ENCODE measurements at regions of chr12 and their contacts with region 1.

Region 1: DNA sequence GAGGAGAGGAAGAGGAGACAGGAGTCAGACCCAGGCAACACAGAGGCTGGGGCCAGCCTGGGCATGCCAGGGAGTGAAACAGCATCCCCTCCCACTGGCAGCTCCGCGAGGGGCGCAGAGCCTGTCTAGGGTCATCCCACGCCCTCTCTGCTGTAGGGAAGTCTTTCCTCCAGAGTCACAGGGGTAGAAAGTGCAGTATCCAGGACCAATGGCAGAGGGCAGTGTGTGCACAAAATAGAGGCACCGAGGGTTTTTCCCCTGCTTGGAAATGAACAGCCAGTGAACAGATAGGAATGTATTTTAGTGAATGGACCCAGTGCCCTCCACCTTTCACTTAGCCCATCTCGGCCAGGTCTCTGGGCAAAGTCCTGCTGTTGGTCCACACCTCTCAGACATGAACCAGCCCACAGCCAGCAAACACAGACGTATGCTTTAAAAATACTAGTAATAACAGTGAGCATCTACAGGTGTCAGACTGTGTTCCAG is 9.4 kb upstream of the KRT74 start:
- DNase-seq: peak; percentile 40 to 64
- H3K4me3 ChIP-seq: no peak overlapping the region
- H3K4me1 ChIP-seq: no peaks in the 10 kb centered on the region
- H3K27me3 ChIP-seq: peaks cover 17% of the 10 kb centered on the region

Region 2: GRCh38 chr12:51419425-51420208 is 1163.4 kb before region 1 on chr12:
- in situ Hi-C with region 1: no loop called
- DNase-seq: no peak
- H3K4me3 ChIP-seq: no peak overlapping the region
- H3K4me1 ChIP-seq: 0 out of 2 replicates have a peak, but pooled peaks cover 3% of the 10 kb centered on the region
- H3K27me3 ChIP-seq: peaks cover 2% of the 10 kb centered on the region; the same call in 1 of the 2 replicates

Region 3: GRCh38 chr12:52865090-52865944 is 282.3 kb after region 1 on chr12:
- in situ Hi-C with region 1: loop called (anchors 5 kb)
- DNase-seq: peak; percentile 67 to 86
- H3K4me3 ChIP-seq: no peak overlapping the region
- H3K4me1 ChIP-seq: no peaks in the 10 kb centered on the region
- H3K27me3 ChIP-seq: no peaks in the 10 kb centered on the region

Measured in HAP-1 (cell line).